ENCODE measurements at regions of chr3 and their contacts with region 1.

Region 1: DNA sequence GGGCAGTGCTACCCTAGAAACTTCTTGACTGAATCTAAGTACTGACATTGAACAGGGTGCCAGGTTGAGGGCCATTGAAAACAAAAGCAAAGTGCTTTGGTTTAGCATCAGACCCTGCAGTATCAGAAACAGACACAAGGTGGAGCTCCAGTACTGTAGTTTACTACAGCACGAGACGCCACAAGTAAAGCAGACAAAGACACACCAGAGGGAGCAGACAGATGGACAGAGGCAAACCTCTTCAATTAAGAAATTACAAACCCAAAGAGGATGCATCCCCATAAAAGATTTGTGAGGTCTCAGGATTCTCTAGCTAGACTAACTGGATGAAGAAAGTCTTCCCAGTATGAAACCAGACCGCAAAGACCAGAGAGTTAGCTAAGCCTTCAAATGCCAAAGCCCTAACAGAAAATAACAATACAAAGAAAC is 16.6 kb downstream of the TOP2B start:
- DNase-seq: peak; percentile 69

Region 2: GRCh38 chr3:25349019-25349576 is 299.0 kb before region 1 on chr3:
- CTCF ChIA-PET with region 1: no interaction called
- POLR2A ChIA-PET with region 1: no interaction called
- DNase-seq: no peak

Region 3: DNA sequence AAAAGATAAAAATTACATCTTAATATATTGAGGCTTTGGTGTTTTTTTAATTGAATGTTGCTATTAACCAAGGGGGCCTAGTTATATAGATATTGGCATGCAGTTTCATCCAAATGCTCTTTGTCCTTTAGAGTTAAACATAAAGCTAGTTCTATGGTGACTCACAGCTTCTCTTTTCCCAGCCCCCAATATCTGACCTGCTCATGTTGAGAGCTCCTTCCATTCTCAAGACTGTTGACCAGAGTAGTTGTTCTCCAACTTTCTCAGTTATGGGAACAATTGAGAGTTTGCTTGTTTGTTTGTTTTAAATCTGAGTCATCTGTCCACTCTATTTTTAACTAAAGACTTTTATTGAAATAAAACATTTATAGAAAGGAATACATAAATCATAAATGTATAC is 235.9 kb before region 1 on chr3:
- CTCF ChIA-PET with region 1: no interaction called
- POLR2A ChIA-PET with region 1: no interaction called
- DNase-seq: no peak

Region 4: GRCh38 chr3:25856902-25857518 is 208.9 kb after region 1 on chr3:
- CTCF ChIA-PET with region 1: interaction called, 25 read pairs
- POLR2A ChIA-PET with region 1: no interaction called
- DNase-seq: peak; percentile 47